GM18951 (cell line): ENCODE measurements at regions of chr5 and their contacts with region 1.

Region 1: DNA sequence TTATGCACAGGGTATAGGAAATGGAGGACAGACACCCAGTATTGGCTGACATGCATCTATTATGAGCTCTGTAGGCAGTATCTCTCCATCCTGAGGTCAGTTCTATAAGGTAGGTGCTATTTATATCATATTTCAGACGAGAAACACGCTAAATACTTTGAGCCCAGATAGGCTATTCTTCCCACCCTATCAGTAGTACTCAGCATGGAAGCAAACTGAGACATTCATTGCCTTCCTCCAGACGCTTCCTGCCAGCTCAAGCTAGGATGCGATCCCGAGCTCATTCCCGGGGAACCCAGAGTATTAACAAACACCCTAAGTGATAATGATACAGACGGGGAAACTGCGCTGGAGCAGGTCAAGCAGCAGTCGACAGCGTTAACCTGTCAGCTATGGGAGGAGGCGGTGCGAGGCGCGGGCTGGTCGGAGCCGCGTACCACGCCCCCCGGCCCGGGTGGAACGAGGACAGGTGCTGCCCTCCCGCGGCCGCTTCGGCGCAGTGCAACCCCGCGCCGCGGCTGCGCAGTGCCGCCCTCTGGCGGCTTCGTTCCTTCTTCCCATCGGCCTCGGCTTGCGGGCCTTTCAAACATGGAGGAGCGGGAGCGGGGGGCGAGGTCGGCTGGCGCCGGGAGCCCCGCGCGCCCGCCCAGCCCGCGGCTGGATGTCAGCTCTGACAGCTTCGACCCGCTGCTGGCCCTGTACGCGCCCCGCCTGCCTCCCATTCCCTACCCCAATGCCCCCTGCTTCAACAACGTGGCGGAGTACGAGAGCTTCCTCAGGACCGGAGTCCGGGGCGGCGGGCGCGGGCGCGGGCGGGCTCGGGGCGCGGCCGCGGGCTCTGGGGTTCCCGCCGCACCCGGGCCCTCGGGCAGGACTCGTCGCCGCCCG is at the start of gene LSM11:
- POLR2A ChIP-seq: peak; percentile 63

Region 2: DNA sequence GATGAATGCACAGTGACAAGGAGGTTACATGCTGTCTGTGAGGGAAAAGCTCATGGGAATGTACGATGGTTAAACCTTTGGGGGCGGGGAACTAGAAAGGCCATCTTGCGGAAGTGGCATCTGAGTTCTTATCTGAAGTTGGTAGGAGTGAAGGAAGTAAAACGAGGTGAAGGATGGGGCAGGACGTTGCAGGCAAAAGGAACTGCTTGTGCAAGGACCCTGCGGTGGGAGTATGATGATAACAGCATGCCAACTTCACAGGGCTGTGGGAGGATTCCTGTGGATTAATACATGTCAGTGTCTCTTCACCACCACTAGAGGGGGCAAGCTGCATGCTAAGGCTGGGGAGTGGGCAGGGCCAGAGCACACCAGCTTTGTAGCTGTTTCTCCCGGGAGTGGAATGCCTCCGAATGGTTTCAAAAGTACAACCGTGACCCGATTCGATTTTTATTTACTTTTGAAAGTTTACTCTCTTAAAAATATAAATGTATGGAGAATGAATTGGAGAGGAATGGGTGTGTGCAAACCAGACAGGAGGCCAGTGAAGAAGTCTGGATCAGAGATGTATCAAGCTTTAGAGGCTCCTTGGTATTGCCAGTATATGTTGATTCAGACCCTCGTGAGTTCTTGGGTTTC is 415.0 kb before region 1 on chr5:
- in situ Hi-C with region 1: loop called (anchors 25 kb)
- POLR2A ChIP-seq: no peak

Region 3: DNA sequence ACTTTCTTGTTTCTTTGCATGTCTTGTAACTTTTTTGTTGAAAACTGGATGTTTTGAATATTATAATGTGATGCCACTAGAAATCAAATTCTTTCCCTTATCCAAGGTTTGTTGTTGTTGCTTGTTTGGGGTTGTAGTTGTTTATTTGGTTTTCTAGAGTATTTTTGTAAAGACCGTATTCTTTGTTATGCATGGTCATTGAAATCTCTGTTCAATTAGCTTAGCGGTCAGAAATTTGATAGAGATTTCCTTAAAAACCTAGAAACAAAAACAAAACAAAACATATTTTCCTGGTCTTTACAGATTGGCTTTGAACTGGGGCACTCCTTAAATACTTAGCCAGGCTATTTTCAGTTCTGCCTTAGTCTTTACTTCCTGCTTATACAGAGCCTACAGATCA is 113.1 kb before region 1 on chr5:
- in situ Hi-C with region 1: no loop called
- POLR2A ChIP-seq: no peak